GM12878 (cell line): ENCODE measurements at regions of chr17 and their contacts with region 1.

Region 1: DNA sequence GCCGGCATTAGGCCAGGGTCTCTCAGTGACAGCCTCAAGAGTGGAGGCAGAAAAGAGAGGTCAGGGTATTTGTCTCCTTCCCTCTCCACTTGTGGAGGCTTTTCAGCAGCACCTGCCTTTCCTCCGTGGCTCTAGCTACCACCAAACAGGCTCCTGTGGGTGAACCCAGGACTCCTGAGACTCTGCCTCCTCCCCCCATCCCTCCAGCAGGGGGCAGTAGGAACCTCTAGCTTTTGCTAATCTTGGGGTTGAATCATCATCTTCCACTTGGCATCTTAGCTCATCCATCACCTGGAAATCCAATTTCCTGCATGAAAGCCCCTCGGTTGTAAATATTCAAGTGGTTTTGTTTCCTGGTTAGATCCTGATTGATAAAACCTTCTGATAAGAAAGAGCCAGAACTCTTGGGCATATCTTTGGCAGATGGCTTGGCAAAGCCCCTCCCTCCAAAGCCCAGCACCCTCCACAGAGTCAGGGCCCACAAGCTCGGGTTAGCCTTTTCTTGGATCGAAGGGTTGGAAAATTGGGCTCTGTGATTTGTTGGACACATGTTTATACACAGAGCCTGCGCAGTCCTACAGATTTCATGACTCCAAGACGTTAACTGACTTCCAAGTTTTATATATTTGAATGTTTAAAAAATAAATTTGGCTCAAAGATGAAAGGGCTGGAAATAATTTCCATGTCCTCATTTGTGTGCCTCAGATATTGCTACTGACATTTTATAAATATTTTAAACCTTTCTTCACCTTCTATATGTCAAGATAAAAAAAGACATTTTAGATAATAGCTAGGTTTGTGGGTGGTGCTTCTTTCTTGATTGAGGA is 322.1 kb downstream of the MAP2K4 start:
- DNase-seq: no peak
- ATAC-seq: peak; percentile 75
- H3K4me3 ChIP-seq: no peak overlapping the region
- H3K27ac ChIP-seq: no peak overlapping the region
- H3K4me1 ChIP-seq: no peaks in the 10 kb centered on the region
- H3K27me3 ChIP-seq: no peaks in the 10 kb centered on the region
- CTCF ChIP-seq: peak; percentile 44 to 58 (median 46)
- EP300 ChIP-seq: no peak
- POLR2A ChIP-seq: no peak
- RAD21 ChIP-seq: peak; percentile 69

Region 2: DNA sequence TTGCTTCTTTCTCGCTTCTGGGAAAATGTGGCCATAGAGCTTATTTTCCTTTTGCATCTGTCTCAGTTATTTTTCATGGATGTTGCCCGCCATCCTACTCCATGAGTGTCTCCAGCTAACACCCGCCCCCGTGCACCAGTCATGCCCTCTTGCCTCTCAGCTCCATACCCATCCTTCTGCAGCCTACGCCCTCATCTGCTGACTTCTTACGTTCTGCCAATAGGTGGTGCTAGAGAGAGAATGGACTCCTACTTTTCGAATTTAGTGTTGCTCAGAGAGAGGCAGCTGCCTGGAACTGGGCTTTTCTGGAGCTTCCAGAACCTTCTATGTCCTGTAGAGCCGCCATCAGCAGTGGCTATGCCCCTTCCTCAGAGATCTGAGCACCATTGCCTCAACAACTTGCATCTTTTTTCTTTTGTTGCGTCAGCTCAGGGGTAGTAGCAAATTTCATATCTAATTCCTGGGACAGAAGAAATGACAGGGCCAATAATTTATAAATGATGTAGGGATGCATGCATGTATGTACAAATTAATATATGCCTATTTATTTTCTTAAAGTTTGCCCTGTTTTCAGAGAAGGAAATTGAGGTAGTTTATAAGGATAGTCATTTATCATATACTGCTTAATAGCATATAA is 203.2 kb after region 1 on chr17:
- CTCF ChIA-PET with region 1: interaction called, 16 read pairs
- POLR2A ChIA-PET with region 1: no interaction called
- RAD21 ChIA-PET with region 1: no interaction called
- SMC1A ChIA-PET with region 1: interaction called, 8 read pairs
- in situ Hi-C with region 1: no loop called
- intact Hi-C with region 1: no loop called
- DNase-seq: no peak
- ATAC-seq: peak; percentile 84
- H3K4me3 ChIP-seq: no peak overlapping the region
- H3K27ac ChIP-seq: no peak overlapping the region
- H3K4me1 ChIP-seq: no peaks in the 10 kb centered on the region
- H3K27me3 ChIP-seq: no peaks in the 10 kb centered on the region
- CTCF ChIP-seq: peak; percentile 63 to 71 (median 70)
- EP300 ChIP-seq: no peak
- POLR2A ChIP-seq: no peak
- RAD21 ChIP-seq: peak; percentile 62